Dendritic cell treated with granulocyte-macrophage colony-stimulating factor and Interleukin-4, amounts not matched to agents 40 ng/mL and 50 ng/mL, for 4 days (primary cell): ENCODE measurements at regions of chr20 and their contacts with region 1.

Region 1: DNA sequence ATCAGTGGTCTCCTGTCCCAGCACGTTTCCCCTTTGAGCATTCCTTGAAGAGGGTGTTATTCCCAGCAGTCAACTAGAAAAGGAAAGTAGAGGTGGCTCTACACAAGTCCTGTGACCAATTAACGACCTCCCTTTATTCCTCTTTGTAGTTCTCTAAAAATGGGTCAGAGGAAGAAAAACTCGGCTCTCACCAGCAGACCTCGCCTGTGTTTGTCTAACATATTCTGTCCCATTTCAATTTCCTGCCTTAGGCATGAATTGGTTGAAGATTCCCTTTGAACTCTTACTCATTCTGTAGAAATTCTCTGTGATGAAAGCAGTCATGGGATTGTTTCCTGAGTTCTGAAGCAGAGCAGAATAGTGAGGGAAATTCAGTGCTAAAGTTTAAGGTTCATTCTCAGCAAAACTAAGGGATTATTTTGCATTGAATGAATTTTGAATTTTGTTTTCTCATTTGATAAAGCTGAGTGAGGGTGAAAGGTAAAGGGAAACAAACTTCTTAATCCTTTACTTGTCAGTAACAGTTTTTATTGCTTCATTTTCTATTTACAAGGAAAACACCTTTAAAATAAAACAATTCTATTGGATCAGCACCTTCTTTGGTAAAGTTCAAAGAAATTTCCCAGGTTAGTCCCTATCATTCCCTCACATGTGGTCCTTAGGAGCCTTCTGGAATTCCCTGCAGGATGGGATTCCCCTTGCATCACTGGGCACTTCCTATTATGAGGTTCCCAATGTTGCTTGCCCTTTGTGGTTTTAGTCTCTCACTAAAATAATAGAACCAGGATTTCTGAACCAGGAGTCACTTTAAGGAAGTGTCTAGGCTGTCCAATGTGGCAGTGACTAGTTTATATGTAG is 105.8 kb downstream of the SLX4IP start:
- H3K4me3 Mint-ChIP-seq: peak overlapping the region; percentile 56
- H3K27ac Mint-ChIP-seq: peak overlapping the region; percentile 67
- H3K4me1 Mint-ChIP-seq: peaks cover 50% of the 10 kb centered on the region
- H3K27me3 Mint-ChIP-seq: no peaks in the 10 kb centered on the region

Region 2: DNA sequence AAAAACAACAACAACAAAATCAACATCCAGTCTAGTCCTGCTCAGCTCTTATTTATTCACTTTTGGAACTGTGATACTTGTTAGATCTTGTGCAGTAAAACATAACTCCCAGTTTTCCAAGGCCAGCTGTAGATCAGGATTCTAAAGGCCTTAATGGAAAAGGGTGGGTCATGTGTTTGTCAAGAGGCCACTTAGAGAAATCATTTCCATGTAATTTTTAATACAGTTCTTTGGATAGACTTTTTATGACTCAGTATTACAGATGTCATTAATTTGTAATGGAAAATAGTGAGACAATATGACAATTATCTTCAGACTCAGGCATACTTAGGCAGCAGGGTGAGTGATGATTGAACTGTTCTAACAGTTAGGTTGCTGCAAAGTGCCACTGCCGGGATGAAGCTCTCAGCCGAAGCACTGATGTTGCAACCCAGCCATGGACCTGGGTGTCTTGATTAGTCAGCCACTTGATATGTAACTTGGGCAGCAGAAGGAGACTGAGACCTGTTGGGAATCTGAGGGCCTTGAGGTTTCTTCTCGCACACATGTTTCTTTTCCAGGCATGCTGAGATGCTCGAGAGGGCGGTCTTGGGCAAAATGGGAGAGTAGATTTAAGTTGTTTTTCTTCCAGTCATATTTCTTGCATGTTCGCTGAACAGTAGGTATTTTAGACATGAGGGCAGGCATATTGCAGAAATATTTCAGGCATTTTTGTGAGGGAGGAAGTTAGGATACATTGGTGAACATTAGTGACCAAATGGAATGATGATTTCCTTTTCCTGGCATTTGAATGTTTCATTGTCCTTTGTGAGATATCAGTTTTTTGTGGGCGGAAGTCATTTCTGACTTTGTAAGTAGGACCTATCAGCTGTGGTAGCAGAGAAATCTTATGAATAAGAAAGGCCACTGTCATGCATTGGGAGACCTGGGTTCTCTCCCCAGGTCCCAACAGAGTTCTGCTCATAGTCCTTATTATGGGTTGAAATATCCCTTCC is 53.4 kb before region 1 on chr20:
- intact Hi-C with region 1: loop called (anchors 5 kb)
- H3K4me3 Mint-ChIP-seq: no peak overlapping the region
- H3K27ac Mint-ChIP-seq: peak overlapping the region; percentile 81
- H3K4me1 Mint-ChIP-seq: peaks cover 69% of the 10 kb centered on the region
- H3K27me3 Mint-ChIP-seq: no peaks in the 10 kb centered on the region

Region 3: DNA sequence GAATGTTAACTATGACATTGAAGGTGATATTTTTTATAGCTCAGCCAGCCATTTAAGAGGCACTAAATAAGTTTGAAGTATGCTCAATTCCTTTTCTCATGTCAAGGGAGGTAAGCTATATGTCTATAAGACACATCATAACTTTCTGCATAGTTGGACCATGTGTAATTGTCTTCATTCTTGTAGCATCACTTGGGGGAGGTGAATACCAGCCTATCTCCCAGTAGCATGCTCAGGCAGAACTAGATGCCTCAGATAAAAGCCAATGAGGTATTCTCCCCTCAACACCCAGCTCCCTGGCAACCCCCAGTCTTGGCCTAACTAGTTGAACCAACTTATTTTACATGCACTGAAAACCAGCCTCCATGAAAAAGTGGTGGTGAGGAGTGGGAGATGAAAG is 291.3 kb after region 1 on chr20:
- intact Hi-C with region 1: no loop called
- H3K4me3 Mint-ChIP-seq: no peak overlapping the region
- H3K27ac Mint-ChIP-seq: no peak overlapping the region
- H3K4me1 Mint-ChIP-seq: no peaks in the 10 kb centered on the region
- H3K27me3 Mint-ChIP-seq: no peaks in the 10 kb centered on the region